Right ventricle myocardium superior (tissue), 1 donor: ENCODE measurements at regions of chr17 and their contacts with region 1.

Region 1: DNA sequence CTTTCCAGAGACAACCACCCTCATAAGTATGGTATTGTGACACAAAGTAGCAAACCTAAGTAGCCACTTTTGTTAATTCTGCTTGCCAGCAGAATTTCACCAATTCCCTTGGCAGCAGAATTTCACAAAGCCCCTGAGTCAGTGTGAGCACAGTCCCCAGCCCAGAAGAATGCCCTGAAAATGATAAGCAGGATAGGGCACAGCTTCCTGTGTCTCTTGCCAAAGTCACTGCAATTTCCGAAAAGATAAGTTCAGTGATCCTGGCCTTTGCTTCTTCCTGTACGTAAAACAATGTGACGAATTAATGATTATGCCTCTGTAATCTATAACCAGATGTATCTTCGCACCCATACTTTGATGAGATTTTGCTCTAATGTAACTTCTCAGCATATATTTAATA is 16.0 kb upstream of the WIPF2 start:
- DNase-seq: no peak
- ATAC-seq: no peak

Region 2: DNA sequence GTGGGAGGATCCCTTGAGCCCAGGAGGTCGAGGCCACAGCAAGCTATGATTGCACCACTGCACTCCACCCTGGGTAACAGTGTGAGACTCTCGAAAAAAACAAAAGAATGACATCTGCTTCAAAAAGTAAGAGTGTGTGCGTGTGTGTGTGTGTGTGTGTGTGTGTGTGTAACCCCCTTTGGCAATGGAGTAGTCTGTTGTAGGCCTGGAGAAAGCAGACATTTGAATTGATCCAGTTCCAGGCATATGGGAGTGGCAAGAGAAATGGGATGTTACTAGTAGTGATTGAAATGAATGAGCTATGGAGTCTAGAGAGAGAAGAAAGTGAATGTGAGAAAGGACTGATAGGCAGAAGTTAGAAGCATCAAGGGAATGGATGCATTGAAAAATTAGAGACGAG is 52.9 kb before region 1 on chr17:
- intact Hi-C with region 1: no loop called
- DNase-seq: no peak
- ATAC-seq: no peak

Region 3: GRCh38 chr17:40287494-40288369 is 84.6 kb after region 1 on chr17 and contains the start of gene CDC6:
- intact Hi-C with region 1: loop called (anchors 5 kb)
- DNase-seq: peak; percentile 99
- ATAC-seq: peak; percentile 99
- total RNA-seq, gene CDC6: 1.1 TPM

Region 4: DNA sequence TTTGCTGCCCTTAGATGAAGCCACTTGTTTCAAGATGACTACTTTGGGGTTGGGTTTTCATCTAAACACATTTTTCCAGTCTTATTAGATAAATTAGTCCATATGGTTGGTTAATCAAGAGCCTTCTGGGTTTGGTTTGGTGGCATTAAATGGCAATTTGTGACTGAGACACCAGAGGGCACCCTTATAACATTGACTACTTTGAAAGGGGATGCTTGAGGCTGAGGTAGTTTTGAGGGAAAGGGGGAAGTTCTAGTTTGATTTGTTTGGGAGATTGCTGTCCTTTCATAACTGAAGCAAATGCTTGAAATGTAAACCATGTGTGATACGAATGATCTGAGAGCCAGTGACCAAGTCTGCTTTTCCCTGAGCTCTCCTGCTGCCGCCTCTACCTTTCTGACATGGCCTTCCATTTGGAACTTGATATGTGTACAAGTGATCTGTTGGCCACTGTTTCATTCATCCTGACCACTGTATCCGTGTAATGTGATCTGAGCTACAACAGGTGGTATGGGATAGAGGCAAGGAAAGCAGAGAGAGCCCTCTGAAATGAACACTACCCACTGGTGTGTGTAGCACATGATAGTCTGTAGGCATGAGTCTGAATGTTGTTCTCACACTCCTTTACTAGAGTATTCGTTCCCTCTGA is 100.0 kb after region 1 on chr17:
- intact Hi-C with region 1: no loop called
- DNase-seq: no peak
- ATAC-seq: peak; percentile 74